HEK293 (cell line): ENCODE measurements at regions of chr9 and their contacts with region 1.

Region 1: DNA sequence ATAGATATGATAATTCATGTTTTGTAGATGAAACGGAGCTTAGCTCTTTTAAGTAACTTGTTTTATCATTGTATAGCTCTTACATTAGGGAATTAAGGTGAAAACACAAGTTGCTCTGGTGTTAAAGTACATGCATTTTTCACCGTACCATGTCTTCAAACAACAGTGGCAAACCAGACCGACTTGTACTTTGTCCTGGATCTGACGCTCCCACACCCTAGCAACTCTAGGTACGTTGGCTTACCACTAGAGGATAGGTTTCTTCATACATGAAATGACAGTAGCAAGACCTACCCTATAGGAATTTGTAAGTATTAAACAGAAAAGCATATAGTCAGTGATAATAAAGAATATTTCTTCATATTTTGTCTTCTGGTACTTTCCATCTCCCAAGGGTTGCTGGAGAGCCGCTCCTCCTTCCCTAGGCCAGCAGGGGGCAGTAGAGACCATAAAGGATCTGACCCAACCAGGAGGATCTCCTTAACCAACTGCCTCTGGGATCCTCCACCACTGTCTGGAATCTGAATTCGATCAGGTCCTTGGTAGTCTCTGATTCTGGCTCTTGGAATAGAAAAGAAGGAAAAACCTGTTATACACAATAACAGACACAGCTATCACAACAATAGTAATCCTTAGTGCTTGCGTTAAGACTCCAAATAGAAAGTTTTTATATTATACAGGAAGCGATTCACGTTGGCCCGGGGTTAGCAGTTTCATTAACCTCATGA is 136.7 kb downstream of the CAVIN4 start:
- H3K4me3 ChIP-seq: no peak overlapping the region
- H3K27ac ChIP-seq: no peak overlapping the region
- H3K4me1 ChIP-seq: no peaks in the 10 kb centered on the region
- CTCF ChIP-seq: 0 out of 2 replicates have a peak, but pooled peaks have one; percentile 22

Region 2: DNA sequence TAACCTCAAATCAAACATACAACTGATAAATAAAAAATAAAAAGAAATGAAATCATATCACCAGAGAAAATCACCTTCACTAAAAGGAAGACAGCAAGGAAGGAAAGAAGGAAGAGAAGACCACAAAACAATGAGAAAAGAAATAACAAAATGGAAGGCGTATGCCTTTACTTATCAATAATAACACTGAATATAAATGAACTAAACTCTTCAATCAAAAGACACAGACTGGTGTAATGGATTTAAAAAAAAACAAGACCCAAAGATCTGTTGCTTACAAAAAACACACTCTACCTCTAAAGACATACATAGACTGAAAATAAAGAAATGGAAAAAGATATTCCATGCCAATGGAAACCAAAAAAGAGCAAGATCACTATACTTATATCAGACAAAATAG is 676.1 kb before region 1 on chr9:
- CTCF ChIA-PET with region 1: no interaction called
- POLR2A ChIA-PET with region 1: no interaction called
- H3K4me3 ChIP-seq: no peak overlapping the region
- H3K27ac ChIP-seq: no peak overlapping the region
- H3K4me1 ChIP-seq: no peaks in the 10 kb centered on the region
- CTCF ChIP-seq: no peak

Region 3: GRCh38 chr9:100370064-100370723 is 344.3 kb before region 1 on chr9:
- CTCF ChIA-PET with region 1: no interaction called
- POLR2A ChIA-PET with region 1: no interaction called
- H3K4me3 ChIP-seq: no peak overlapping the region
- H3K27ac ChIP-seq: no peak overlapping the region
- H3K4me1 ChIP-seq: no peaks in the 10 kb centered on the region
- CTCF ChIP-seq: no peak

Region 4: DNA sequence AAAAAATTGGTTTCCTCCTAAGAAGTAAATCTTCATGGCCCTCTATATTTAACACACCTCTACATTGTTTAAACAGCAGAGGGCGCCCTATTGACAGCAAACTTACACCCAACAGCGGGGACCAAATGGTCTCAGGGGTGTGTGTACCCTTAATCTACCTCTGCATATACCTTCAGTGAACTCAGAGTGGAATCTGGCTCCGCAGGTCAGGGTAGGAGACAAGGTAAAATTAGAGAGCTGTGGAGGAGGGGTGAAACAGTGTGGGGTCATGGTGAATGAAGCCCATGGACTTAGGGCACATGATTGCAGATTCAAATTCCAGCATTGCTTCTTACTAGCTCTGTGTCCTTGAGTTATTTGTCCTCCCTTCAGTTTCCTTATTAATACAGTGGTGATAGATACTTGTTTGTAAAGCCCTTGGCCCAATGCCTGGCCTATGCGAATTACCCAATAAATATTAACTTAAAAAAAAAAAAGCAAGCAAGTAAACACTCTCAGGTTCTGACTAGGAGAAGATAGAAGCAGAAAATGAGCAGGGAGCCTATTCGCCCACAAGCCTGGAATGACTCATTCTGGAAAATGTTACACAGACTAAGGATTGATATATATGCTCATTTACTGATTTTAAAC is 13.7 kb before region 1 on chr9:
- CTCF ChIA-PET with region 1: interaction called, 15 read pairs
- POLR2A ChIA-PET with region 1: no interaction called
- H3K4me3 ChIP-seq: no peak overlapping the region
- H3K27ac ChIP-seq: no peak overlapping the region
- H3K4me1 ChIP-seq: no peaks in the 10 kb centered on the region
- CTCF ChIP-seq: no peak

Region 5: DNA sequence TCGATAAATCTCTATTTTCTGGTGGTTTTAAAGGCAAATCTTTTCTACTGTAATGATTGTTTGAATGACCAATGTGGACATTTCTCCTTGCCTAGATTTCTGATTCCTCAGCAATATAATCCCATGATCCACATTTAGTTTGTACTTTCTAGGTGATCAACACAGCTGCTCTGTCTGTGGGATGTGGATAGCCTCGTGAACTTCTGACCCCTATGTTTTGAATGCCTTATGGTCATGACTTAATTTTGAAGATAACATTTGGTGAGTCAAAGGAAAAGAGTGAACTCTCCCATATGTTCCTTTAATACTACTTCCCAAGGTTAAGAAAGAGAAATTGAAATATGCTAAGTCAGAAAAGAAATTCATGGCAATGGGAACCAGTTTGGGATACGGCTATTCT is 10.8 kb after region 1 on chr9:
- CTCF ChIA-PET with region 1: interaction called, 15 read pairs
- POLR2A ChIA-PET with region 1: no interaction called
- H3K4me3 ChIP-seq: no peak overlapping the region
- H3K27ac ChIP-seq: no peak overlapping the region
- H3K4me1 ChIP-seq: no peaks in the 10 kb centered on the region
- CTCF ChIP-seq: no peak

Region 6: DNA sequence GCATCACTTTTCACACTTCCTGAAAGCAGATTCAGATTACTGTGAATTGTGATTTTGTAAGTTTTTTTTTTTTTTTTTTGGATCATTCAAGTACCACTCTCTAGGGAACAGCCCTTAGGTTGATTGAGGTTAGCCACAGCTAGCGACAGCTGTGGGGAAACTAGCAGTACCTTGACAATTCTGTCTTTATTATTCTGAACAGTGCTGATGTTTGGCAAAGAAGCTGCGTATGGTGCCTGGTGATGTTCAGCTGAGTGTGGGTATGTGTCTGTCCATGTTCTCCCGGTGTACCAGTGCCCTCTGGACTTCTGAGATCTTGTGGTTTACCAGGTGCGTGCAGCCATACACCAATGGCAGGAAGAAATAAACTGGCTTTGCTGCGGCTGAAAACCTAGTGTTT is 196.7 kb after region 1 on chr9:
- CTCF ChIA-PET with region 1: no interaction called
- POLR2A ChIA-PET with region 1: no interaction called
- H3K4me3 ChIP-seq: no peak overlapping the region
- H3K27ac ChIP-seq: no peak overlapping the region
- H3K4me1 ChIP-seq: no peaks in the 10 kb centered on the region
- CTCF ChIP-seq: no peak

Region 7: DNA sequence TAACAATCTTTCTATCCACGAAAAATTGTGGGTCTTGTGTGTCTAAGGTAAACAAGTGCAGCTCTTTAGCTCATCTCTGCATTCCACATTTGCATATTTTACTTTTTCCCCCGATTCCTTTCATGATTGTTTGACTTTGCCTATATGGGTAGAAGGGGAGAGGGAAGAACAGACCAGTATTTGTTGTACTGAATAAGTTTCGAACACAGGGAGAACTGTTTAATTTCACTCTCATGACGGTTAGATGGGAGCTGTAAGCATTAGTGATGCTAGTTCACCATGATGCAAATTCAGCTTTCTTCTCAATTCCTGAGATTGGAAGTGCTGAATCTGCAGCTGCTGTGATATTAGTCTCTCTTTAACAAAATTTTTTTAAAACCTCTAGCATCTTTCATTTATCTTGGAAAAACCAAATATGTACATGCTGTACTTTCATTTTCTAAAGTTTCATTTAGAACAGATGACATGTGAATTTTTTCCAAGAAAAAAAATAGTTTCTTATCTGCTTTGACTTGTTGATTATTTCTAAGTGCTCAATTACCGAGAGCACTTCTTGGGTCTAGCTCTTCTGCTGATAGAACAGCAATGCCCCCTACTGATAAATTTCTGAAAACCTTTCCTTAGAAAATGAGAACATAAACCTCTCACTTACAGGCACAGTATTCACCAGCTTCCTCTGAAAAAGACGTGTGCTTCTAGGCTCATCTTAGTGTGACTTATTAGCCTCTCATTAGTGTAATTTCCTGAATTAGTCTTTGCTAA is 520.8 kb after region 1 on chr9:
- CTCF ChIA-PET with region 1: interaction called, 20 read pairs
- POLR2A ChIA-PET with region 1: no interaction called
- H3K4me3 ChIP-seq: no peak overlapping the region
- H3K27ac ChIP-seq: no peak overlapping the region
- H3K4me1 ChIP-seq: no peaks in the 10 kb centered on the region
- CTCF ChIP-seq: no peak